ENCODE measurements at regions of chr6 and their contacts with region 1.

Region 1: DNA sequence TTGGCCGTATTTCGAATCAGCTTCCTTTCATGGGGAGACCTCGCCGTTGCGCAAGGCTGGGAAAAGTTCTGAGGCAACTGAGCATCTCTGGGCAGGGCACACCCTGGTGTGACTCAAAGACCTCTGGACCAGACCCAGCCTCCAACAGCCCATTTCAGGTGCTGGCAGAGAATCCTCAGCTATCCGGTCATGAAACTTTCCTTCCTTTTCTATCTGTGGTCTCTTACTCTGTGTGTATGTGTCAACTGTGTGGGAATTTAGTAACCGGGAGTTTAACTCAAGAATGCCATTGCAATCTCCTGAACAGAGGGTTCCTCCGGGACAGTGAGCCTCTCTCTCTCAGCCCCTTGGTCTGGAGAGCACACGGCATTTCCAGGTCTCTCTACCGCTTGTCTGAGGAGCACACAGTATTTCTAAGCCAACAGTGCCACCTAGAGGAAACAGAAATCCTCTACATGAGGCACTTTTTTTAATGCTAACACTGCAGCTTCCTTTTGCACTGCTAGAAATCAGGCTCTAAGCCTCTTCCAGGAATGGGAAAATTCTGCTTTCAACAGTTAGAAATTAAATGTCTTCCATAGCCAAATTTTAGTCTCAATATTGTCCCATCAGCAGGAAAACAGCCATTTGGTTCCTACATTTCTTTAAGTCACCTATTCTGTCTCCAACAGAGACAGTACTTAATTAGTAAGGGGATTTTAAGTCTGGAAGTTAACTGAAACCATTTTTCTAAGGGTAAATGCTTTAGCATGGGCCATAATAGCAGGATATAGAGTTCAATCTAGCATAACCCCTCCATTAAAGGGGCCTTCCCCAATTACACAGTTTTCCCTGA is 32.7 kb downstream of the PLN start:
- DNase-seq: peak; percentile 64 to 91
- ATAC-seq: peak; percentile 90 to 95 (median 92)
- H3K4me3 ChIP-seq: peak overlapping the region; percentile 9
- H3K27ac ChIP-seq: peak overlapping the region; percentile 86
- H3K4me1 ChIP-seq: peaks cover 33% of the 10 kb centered on the region
- H3K27me3 ChIP-seq: no peaks in the 10 kb centered on the region
- CTCF ChIP-seq: peak; percentile 72

Region 2: DNA sequence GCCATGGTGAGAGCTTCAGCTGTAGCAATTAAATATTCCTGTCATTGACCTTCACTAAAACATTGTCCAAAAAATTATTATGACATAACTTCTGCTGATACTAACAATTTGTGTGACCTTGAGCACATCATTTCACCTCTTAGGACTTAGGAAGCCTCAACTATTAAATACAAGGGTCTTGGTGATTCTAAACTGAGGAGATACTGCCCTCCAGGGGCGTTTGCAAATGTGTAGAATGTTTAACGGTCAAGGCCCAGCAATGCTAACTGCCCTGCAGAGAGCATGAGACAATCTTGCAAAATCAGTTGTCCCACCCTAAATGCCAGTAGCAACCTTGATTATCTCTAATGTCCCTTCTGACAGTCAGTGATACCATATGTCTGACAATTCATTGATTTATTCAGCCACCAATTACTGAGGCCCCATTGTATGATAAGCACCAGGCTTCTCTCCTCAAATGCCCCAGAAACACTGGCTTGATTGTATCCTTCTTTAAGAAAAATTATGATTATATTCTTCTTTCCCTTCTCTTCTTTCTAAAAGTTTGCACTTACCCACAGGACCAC is 316.8 kb before region 1 on chr6:
- intact Hi-C with region 1: no loop called
- DNase-seq: no peak
- ATAC-seq: peak; percentile 52 to 83 (median 67)
- H3K4me3 ChIP-seq: no peak overlapping the region
- H3K27ac ChIP-seq: no peak overlapping the region
- H3K4me1 ChIP-seq: no peaks in the 10 kb centered on the region
- H3K27me3 ChIP-seq: no peaks in the 10 kb centered on the region
- CTCF ChIP-seq: peak; percentile 60

Region 3: DNA sequence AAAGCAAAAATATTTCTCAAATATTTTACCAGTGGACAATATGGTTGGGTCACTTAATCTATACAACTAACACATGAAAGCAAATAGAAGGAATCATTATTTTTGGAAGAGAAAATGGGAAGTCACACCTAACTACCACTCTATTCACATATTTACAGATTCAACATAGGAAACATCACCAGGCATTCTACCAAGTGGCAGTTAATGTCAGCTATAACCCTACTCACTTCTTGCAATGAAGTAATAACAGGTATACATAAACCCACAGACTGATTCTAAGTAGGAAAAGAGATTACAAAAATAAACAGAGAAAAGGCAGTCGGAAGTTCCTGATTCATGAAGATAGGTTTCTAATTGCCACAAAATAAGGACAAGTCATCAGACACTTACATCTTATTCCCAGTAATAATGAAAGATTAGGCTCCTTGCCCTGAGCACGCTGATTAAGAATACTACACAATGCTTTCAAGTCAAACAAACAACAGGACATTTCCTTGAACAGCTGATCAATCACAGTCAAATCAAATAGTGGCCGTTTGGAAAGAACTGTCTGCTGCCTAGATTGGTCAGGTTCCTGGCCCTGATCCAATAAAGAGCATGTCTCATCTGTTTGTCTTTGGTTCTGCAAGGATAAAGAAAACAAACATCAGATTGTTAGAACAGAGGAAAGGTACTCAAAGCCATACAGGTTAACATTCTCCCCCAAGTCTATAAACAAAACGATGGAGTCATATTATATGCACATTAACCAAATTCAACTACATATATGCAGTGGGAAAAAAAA is 111.9 kb before region 1 on chr6:
- intact Hi-C with region 1: no loop called
- DNase-seq: no peak
- ATAC-seq: peak in 2 of 4 donors; percentile 36 to 44
- H3K4me3 ChIP-seq: no peak overlapping the region
- H3K27ac ChIP-seq: no peak overlapping the region
- H3K4me1 ChIP-seq: no peaks in the 10 kb centered on the region
- H3K27me3 ChIP-seq: no peaks in the 10 kb centered on the region
- CTCF ChIP-seq: no peak

Region 4: GRCh38 chr6:118618679-118619377 is 38.0 kb after region 1 on chr6:
- intact Hi-C with region 1: loop called (anchors 5 kb)
- DNase-seq: peak; percentile 47 to 76
- ATAC-seq: peak; percentile 81 to 89 (median 83)
- H3K4me3 ChIP-seq: no peak overlapping the region
- H3K27ac ChIP-seq: peak overlapping the region; percentile 33
- H3K4me1 ChIP-seq: peaks cover 68% of the 10 kb centered on the region
- H3K27me3 ChIP-seq: no peaks in the 10 kb centered on the region
- CTCF ChIP-seq: peak; percentile 88